HCT116 (cell line): ENCODE measurements at regions of chr13 and their contacts with region 1.

Region 1: DNA sequence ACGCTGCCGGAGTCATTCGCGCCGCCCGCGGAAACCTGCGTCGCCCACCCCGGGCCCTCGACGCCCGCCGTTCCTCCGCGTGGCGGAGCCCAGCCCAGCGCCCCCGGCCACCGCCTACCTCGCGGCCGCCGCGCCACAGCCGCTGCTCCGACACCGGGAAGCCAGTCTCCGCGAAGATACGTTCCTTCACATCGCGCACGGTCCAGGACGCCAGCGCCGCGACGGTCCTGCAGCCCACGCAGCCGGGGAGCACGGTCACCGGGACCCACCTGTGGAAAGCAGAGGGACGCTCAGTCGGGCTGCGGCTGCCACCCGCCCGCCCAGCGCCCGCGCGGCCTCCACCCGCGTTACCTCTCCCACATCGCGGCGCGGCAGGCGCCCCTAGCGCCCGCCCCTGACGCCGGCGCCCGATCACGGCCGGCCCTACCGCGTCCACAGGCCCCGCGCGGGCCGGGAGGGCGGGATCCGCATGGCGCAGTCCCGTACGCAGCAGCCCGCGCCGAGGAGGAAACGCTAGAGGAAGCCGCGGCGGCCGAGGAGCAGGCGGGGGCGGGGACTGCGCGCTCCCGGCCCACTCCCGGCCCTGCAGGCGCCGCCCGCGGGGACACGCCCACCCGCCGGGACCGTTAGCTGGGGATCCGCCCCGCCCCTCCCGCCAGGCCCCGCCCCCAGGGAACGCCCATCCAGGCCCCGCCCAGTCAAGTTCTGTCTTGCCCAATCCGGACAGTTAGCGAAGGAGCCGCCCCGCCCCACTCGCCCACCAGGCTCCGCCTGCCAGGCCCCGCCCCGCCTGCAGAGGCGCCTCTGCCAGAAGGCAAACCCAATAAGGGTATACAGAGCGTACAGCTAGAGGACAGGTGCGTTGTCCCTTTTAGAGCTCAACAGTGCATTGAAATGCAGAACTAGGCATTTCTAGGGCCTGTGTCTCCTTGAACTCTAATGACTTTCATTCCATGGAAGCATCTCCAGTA is 58.2 kb downstream of the SACS start:
- DNase-seq: peak; percentile 77
- ATAC-seq: peak; percentile 96
- H3K4me3 ChIP-seq: peak overlapping the region; percentile 56 to 78
- H3K27ac ChIP-seq: peak overlapping the region; percentile 69
- H3K4me1 ChIP-seq: peaks cover 6 to 11% of the 10 kb centered on the region in 2 experiments; a peak in 3 of 4 replicates
- H3K27me3 ChIP-seq: no peaks in the 10 kb centered on the region
- CTCF ChIP-seq: no peak
- POLR2A ChIP-seq: peak; percentile 83
- RAD21 ChIP-seq: no peak

Region 2: GRCh38 chr13:23579072-23579895 is 204.0 kb after region 1 on chr13:
- CTCF ChIA-PET with region 1: no interaction called
- POLR2A ChIA-PET with region 1: no interaction called
- RAD21 ChIA-PET with region 1: no interaction called
- intact Hi-C with region 1: loop called (anchors 10 kb)
- DNase-seq: peak; percentile 54
- ATAC-seq: peak; percentile 96
- H3K4me3 ChIP-seq: peak overlapping the region; percentile 67 to 74
- H3K27ac ChIP-seq: peak overlapping the region; percentile 69; the same call in 1 of the 2 replicates
- H3K4me1 ChIP-seq: peaks cover 3 to 15% of the 10 kb centered on the region in 2 experiments; a peak in 1 of 4 replicates
- H3K27me3 ChIP-seq: no peaks in the 10 kb centered on the region
- CTCF ChIP-seq: no peak
- POLR2A ChIP-seq: no peak
- RAD21 ChIP-seq: no peak

Region 3: DNA sequence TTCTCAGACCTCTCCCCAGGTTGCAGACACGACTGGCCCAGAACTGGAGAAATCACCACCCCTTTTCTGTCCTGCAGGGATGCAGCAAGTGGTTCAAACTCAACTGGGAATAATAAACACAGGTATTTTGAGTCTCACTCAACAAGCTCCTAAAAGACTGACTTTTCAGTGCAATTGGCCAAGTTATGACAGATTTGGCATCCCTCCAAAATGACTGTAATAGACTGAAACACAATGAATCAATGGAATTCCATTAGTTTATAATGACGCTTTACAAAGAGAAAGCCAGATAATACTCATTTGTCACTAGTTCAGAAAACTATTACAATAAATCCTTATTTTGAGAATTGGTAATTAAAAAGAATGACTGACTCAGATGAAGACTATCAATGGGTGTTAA is 475.8 kb after region 1 on chr13:
- CTCF ChIA-PET with region 1: no interaction called
- POLR2A ChIA-PET with region 1: no interaction called
- RAD21 ChIA-PET with region 1: no interaction called
- intact Hi-C with region 1: no loop called
- DNase-seq: no peak
- ATAC-seq: no peak
- H3K4me3 ChIP-seq: no peak overlapping the region
- H3K27ac ChIP-seq: no peak overlapping the region
- H3K4me1 ChIP-seq: no peaks in the 10 kb centered on the region
- H3K27me3 ChIP-seq: no peaks in the 10 kb centered on the region
- CTCF ChIP-seq: no peak
- POLR2A ChIP-seq: no peak
- RAD21 ChIP-seq: no peak